Transverse colon (tissue), 4 donors: ENCODE measurements at regions of chr12 and their contacts with region 1.

Region 1: DNA sequence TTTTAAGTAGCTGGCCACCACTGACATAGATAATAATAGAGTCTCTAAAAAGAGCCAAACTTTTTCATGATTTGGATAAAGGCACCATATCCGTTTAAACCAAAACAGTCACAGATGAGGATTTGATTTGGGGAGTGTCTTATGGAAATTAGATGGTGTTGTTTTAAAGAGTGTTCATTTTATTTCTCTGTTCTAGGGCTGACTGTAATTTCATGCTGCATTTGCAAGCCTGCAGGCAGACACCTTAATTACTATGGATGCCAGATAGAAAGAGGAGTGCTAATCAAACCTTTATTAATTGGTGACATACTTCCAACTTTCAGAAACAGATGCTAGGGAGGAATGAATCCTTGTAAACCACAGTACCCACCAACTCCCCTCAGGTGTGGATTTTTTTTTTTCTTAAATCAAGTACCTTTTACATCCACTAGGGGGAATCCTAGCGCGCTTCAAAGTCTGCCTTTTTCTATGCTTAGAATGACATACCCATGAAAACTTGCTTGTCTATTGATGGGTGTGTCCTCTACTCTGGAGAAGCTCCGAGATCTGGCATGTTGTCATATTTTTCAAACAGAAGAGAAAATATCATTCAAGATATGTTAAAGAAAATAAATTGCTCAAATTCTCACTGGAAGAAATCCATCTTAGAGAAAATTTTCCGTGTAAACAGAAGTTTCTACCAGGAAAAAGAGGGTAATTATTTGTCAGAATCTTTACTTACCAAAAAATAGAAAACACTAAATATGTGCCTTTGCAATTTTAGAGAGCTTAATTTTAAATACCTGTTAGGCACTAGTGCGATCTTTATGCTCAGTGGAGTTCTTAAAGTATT is 14.2 kb upstream of the PLXNC1 start:
- DNase-seq: no peak
- H3K4me3 ChIP-seq: no peak overlapping the region
- H3K27ac ChIP-seq: no peak overlapping the region
- H3K4me1 ChIP-seq: peaks cover 0 to 4% (median 0%) of the 10 kb centered on the region in 4 donors
- H3K27me3 ChIP-seq: peaks cover 5% of the 10 kb centered on the region
- CTCF ChIP-seq: peak; percentile 77 to 88 (median 81)
- EP300 ChIP-seq: no peak
- POLR2A ChIP-seq: no peak

Region 2: DNA sequence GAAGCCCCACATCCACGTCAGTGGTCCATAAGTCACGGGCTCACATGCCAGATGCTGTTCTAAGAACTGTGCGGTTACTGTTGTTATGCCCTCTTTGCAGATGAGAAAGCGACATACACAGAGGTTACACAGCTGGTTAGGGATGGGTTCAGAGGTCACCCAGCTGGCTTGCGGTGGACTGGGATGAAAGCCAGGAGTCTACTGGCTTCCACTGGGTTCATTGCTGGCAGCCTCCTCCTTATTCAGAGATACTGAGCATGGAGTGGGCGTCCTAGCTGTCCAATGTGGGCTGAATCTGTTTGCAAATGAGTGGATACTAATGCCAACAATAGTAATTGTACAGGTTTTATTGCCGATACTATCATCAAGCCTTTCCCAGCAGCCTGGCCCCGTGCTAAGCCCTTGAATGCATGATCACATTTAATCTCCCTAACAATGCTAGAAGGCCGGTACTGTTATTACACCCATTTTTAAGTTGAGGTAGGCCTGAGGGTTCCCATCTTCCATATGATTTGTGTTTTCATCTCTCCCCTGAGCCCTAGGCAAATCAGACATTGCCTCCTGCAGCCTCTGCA is 143.3 kb after region 1 on chr12:
- in situ Hi-C with region 1: no loop called
- intact Hi-C with region 1: no loop called
- DNase-seq: no peak
- H3K4me3 ChIP-seq: no peak overlapping the region
- H3K27ac ChIP-seq: no peak overlapping the region
- H3K4me1 ChIP-seq: peaks cover 0 to 7% (median 0%) of the 10 kb centered on the region in 4 donors
- H3K27me3 ChIP-seq: no peaks in the 10 kb centered on the region
- CTCF ChIP-seq: no peak
- EP300 ChIP-seq: no peak
- POLR2A ChIP-seq: no peak

Region 3: DNA sequence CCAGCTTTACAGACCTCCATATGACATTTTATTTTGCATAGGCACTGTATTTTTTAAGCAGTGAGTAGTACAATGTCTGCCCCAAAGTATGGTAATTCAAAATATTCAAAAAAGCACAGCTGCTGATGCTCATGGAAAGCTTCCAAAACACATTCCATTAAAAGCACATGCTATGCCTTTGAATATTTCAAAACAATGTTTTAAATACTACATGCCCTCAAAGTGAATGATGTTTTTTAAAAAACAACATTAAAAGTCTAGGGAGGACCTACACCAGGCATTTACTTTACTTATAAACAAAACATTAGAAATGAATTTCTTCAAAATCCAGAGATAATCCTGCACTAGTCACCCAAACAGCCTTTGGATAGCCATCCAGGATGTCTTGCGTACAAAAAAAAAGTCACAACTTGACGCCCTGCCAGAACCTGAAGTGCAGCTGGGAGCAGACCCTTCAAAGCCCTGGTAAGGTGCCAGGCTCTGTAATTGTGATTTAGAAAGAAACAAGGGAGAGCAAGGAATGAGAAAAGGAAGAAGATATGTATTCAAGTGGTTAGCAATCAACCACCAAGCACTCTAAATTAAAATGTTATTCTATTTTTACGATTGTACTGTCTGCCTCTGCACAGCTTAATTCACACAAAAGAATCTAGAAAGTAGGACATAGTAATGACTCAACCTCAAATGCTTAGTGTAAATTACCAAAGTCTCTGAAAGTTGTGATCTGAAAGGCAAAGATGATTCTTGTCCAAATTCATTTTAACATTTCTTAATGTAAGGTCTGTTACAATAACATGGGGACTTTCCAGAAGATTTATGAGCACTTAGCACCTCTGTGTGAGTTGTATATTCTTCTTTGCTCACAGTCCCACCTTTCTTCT is 293.6 kb after region 1 on chr12:
- in situ Hi-C with region 1: loop called (anchors 10 to 25 kb)
- intact Hi-C with region 1: no loop called
- DNase-seq: peak; percentile 24
- H3K4me3 ChIP-seq: no peak overlapping the region
- H3K27ac ChIP-seq: peak overlapping the region in 3 of 4 donors; percentile 10 to 53 (median 46)
- H3K4me1 ChIP-seq: peaks cover 0 to 17% (median 12%) of the 10 kb centered on the region in 4 donors
- H3K27me3 ChIP-seq: no peaks in the 10 kb centered on the region
- CTCF ChIP-seq: no peak
- EP300 ChIP-seq: no peak
- POLR2A ChIP-seq: no peak